Left cardiac atrium (tissue), 4 donors: ENCODE measurements at regions of chr5 and their contacts with region 1.

Region 1: GRCh38 chr5:151058891-151059489 is 21.8 kb downstream of the TNIP1 start:
- DNase-seq: no peak
- ATAC-seq: peak in 1 of 2 donors; percentile 16

Region 2: GRCh38 chr5:151107738-151108508 is 48.9 kb after region 1 on chr5:
- intact Hi-C with region 1: loop called (anchors 2 kb)
- DNase-seq: peak; percentile 70
- ATAC-seq: peak; percentile 72 to 76

Region 3: GRCh38 chr5:152593407-152593932 is 1534.5 kb after region 1 on chr5:
- intact Hi-C with region 1: no loop called
- DNase-seq: no peak
- ATAC-seq: no peak